ENCODE measurements at regions of chr7 and their contacts with region 1.

Region 1: DNA sequence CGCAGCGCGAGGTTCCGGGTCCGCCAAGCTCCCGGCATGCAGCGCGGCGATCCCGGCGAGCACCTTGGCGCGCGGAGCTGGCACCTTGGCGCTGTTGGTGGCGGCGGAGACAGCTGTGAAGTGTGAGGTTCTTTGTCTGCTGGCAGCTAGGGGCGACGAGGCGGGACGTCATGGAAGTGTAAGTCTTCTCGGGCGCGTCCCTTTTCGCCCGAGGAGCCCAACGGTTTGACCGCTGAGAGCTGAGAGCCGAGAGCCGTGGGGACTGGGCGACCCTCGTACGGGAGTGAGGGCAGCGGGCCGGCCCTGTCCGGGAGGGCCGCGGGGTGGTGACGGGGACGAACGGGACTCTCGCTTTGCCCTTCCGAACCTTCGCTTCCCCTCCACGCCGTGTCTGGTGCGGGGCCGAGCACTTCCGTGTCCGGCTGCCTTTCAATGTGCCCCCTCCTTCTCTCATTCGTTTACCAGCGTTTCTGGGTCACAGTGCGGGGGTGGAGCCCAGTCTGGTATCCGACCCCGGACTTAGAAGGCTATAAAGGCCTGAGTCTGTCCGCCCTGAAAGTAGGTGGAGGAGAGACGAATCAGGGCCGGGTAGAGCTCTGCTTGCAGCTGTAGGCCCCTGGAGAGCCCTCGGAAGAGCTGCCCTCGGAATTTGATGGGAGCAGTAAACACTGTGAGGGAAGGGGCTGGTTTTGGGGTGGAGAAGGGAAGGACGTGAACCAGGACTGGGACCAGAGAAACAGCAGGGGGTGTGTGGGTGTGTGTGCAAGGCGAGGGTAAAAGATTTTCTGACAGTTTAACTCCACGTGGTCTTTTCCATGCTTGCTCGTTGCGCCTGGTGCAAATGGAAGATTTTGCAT is at the start of gene CRCP:
- DNase-seq: no peak
- H3K4me3 ChIP-seq: peak within 1 kb of the TSS; percentile 98
- H3K27me3 ChIP-seq: no peaks in the 10 kb centered on the region
- CTCF ChIP-seq: peak; percentile 52
- polyA plus RNA-seq, gene CRCP: 24.7 and 24.8 TPM in 2 replicates

Region 2: DNA sequence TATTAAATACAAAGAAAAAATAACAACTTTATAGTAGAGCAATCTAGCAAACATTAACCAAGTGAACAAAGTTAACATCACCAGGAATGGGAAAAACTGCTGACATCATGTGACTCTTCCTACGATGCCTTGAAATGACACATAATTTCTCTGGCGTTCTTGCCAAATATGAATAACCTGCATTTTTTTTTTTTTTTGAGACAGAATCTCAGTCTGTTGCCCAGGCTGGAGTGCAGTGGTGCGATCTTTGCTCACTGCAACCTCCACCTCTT is 368.7 kb before region 1 on chr7:
- CTCF ChIA-PET with region 1: no interaction called
- POLR2A ChIA-PET with region 1: no interaction called
- DNase-seq: no peak
- H3K4me3 ChIP-seq: no peak overlapping the region
- H3K27me3 ChIP-seq: no peaks in the 10 kb centered on the region
- CTCF ChIP-seq: no peak

Region 3: DNA sequence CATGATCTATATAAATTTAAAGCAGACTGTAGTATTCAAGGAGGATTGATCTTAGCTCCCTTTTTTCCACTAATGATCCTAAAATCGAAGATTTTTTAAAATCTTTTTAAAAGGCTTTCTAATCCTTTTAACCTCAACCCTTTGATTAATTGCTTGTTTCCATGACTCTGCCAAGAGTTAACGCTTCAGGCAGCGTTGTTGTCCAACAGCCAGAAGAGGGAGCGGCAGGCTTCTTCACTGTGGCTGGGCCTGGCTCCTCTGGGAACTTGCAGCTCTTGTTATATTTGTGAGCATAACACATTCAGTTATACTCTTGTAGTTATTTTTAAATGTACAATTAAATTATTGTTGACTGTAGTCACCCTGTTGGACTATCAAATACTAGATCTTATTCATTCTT is 25.9 kb after region 1 on chr7:
- CTCF ChIA-PET with region 1: interaction called, 11 read pairs
- POLR2A ChIA-PET with region 1: no interaction called
- DNase-seq: no peak
- H3K4me3 ChIP-seq: no peak overlapping the region
- H3K27me3 ChIP-seq: no peaks in the 10 kb centered on the region
- CTCF ChIP-seq: peak; percentile 77